ENCODE measurements at regions of chr7 and their contacts with region 1.

Region 1: DNA sequence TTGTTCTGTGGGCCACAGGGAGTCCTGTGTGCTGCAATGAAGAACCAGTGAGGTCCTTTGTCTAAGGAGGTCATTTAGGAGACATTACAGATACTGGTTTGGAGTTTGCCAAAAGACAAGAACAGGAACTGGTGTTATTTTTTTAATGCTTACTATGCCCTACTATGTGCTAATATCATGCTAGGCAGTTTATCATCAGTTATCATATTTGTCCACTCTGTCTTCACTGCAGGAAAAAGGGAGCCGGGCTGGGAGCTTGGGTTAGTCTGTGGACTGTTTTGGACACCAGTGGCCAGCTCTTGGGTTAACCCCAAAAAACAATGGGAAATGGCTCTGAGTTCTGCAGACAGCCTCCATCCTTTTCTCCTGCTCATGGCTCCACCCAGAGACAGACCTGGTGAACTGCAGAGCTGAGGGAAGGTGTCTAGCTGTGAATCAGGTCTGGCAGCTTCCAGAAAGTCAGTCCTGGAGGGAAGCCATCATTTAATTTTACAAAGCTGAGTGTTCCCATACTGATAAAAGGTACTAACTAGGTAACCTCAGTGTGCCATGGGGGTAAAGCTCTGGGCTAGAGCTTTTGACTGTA is 101.2 kb upstream of the ZNF746 start:
- DNase-seq: peak; percentile 66
- H3K4me3 Mint-ChIP-seq: no peak overlapping the region
- H3K27ac Mint-ChIP-seq: peak overlapping the region; percentile 72
- H3K4me1 Mint-ChIP-seq: peaks cover 35% of the 10 kb centered on the region
- H3K27me3 Mint-ChIP-seq: no peaks in the 10 kb centered on the region

Region 2: DNA sequence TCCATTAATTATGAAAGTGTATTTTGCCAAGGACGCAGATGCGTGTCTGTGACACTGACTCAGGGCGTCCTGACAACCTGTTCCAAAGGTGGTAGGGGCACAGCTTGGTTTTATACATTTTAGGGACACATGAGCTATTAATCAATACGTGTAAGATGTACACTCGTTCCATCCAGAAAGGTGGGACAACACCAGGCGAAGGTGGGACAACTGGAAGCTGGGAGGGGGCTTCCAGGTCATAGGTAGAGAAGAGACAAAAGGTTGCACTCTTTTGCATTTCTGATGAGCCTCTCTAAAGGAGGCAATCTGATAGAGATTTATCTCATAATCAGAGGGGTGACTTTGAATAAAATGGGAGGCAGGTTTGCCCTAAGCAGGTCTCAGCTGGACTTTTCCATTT is 18.5 kb before region 1 on chr7:
- CTCF ChIA-PET with region 1: interaction called, 3 read pairs
- POLR2A ChIA-PET with region 1: no interaction called
- intact Hi-C with region 1: loop called (anchors 2 kb)
- DNase-seq: no peak
- H3K4me3 Mint-ChIP-seq: no peak overlapping the region
- H3K27ac Mint-ChIP-seq: peak overlapping the region; percentile 80
- H3K4me1 Mint-ChIP-seq: peaks cover 22% of the 10 kb centered on the region
- H3K27me3 Mint-ChIP-seq: no peaks in the 10 kb centered on the region

Measured in activated CD4-positive, alpha-beta memory T cell treated with anti-CD3 and anti-CD28 coated beads for 36 hours (primary cell).